ENCODE measurements at regions of chr17 and their contacts with region 1.

Region 1: DNA sequence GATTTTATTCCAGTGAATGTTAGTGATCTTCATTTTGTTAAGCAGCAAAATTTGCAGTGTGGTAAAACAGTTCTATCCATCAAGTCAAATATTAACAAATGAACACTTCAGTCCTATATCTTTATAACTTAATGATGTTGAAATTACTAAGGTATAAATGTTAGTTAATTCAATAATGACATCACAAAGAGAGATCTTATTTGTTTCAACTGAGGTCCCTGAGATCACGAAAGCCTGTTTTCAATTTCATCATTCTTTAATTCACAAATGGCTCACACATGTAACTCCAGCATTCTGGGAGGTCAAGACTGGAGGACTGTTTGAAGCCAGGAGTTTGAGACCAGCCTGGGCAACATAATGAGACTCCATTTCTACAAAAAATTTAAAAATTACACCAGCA is 13.9 kb downstream of the SMURF2 start:
- DNase-seq: no peak
- H3K4me3 ChIP-seq: no peak overlapping the region
- H3K27ac ChIP-seq: no peak overlapping the region
- H3K4me1 ChIP-seq: peaks cover 9% of the 10 kb centered on the region
- CTCF ChIP-seq: no peak

Region 2: DNA sequence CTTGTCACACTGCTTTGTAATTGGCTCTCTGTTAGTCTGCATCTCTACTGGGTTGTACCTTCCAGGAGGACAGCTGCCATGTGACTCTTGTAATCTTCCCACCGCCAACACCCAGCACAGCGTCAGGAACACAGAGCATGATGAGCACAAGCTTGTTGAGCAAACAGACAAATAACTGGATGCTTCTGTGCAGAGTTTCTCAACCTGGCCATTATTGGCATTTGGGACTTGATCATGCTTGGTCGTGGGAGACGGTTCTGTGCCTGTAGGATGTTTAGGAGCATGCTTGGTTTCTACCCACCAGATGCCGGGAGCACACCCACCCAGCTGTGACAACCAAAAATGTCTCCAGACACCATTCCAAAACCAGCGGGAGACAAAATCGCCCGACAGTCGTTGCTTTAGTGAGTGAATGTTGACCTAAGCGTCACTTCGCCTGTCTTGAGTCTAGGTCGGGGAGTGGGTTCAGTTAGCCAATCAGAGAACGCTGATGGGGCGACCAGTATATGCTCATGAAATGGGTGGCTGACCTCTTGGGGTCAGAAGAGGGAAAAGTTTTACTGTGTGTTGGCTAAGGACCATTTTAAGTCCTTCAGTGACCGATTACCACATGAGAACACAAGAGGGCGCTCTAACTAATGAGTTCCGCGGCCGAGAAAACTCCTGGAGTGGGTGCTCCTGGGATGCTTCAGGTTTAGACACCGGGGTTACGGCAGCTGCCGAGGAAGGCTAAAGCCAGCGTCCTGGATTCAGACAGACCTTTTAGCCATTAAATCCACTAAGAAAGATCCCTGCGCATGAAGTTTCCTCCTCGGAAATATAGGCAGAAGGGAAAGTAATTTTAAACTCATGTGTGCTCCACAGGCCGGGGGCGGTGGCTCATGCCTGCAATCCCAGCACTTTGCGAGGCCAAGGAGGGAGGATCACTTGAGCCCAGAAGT is 327.4 kb before region 1 on chr17:
- CTCF ChIA-PET with region 1: no interaction called
- POLR2A ChIA-PET with region 1: no interaction called
- intact Hi-C with region 1: loop called (anchors 10 kb)
- DNase-seq: peak; percentile 82
- H3K4me3 ChIP-seq: no peak overlapping the region
- H3K27ac ChIP-seq: no peak overlapping the region
- H3K4me1 ChIP-seq: peaks cover 17% of the 10 kb centered on the region
- CTCF ChIP-seq: peak; percentile 97

Region 3: GRCh38 chr17:64506576-64507477 is 141.4 kb before region 1 on chr17 and contains the start of gene CEP95:
- CTCF ChIA-PET with region 1: no interaction called
- POLR2A ChIA-PET with region 1: interaction called, 11 read pairs
- intact Hi-C with region 1: no loop called
- DNase-seq: peak; percentile 97
- H3K4me3 ChIP-seq: peak within 1 kb of the TSS; percentile 100
- H3K27ac ChIP-seq: peak within 1 kb of the TSS; percentile 90
- H3K4me1 ChIP-seq: peaks cover 34% of the 10 kb centered on the region
- CTCF ChIP-seq: no peak
- total RNA-seq, gene CEP95: 62.7 and 87.9 TPM in 2 replicates

Region 4: GRCh38 chr17:64538508-64539130 is 109.6 kb before region 1 on chr17:
- CTCF ChIA-PET with region 1: no interaction called
- POLR2A ChIA-PET with region 1: no interaction called
- intact Hi-C with region 1: loop called (anchors 5 kb)
- DNase-seq: no peak
- H3K4me3 ChIP-seq: no peak overlapping the region
- H3K27ac ChIP-seq: no peak overlapping the region
- H3K4me1 ChIP-seq: no peaks in the 10 kb centered on the region
- CTCF ChIP-seq: no peak